ENCODE measurements at regions of chr6 and their contacts with region 1.

Region 1: DNA sequence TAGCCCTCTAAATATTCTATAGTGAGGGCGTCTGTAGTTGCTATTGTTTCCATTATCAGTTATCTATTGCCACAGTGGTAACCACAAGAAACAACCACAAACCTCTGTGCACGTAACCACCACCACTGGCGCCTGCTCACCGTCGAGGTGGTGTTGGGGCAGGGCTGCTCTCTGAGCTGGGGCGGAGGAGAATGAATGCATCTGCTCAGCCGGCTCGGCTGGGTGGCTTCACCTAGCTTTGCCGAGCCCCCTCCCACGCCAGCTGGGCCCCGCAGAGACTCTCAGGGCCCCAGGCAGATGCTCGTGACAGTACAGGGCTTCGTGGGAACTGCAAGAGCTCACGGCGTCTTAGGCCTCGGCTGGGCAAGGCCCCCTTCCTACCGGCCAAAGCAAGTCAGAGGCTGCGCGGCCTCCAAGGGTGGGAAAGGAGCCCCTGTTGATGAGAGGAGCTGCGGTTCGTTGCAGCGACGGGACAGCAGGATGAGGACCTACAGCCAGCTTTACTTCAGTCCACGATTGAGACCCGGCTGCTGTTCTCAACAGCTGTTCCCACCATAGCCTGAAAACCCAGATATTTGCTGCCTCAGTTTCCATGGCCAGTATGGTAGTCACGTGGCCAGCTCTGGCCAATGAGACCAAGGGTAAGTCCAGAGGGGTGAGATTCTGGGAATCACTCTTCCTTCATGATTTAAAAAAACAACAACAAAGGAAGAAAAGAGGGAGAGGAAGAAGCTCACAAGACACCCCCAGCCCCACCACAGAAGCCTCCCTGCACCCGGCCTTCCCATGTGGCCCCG is 120.2 kb upstream of the AFDN start:
- DNase-seq: peak; percentile 77
- H3K4me3 Mint-ChIP-seq: peak overlapping the region; percentile 63
- H3K27ac Mint-ChIP-seq: peak overlapping the region; percentile 95
- H3K4me1 Mint-ChIP-seq: peaks cover 50% of the 10 kb centered on the region
- H3K27me3 Mint-ChIP-seq: peaks cover 37% of the 10 kb centered on the region

Region 2: GRCh38 chr6:166419286-166419685 is 1287.2 kb before region 1 on chr6:
- intact Hi-C with region 1: loop called (anchors 10 kb)
- DNase-seq: peak; percentile 61
- H3K4me3 Mint-ChIP-seq: no peak overlapping the region
- H3K27ac Mint-ChIP-seq: no peak overlapping the region
- H3K4me1 Mint-ChIP-seq: peaks cover 62% of the 10 kb centered on the region
- H3K27me3 Mint-ChIP-seq: peaks cover 4% of the 10 kb centered on the region

Region 3: DNA sequence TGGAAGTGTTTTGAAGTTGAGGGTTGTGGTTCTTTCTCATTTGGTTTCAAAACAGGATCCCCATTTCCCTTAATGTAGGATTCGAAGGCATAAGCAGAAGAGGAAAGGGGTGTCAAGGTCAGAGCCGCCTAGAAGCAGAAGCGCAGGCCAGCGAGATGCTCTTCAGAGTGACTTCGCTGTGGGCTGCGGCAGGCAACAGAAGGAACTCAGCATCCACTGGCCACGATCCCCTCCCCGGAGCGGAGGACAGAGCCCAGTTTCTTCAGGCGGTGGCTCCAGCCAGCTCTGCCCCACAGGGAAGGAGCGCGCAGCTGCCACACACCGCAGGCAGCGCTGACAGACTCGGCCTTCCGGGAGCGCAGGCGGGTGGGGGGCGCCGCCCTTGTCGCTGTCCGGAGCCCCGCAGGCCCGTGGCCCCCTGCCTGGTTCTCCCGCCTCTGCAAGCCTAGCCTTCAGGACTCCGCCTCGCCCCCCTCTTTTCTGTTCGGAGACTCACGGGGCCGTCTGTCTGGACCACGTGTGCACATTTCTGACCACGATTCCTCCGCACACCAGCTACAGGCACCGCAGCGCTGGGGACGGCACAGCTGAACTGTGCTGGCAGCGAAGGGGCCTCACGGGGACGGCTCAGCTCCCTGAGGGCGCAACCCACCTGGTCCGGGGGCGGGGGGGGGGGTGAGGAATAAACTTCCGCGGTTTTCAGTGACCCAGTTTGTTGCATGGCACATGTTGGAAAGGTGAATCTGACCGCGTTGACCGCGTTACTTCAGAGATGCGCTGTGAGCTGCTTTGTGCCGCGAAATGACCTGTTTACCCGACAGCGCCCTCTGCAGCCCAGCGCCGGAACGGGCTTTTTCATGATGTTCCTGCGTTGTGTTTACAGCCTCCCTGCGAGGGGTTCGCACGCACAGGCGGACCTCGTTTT is 355.5 kb before region 1 on chr6:
- intact Hi-C with region 1: loop called (anchors 2 kb)
- DNase-seq: peak; percentile 72
- H3K4me3 Mint-ChIP-seq: peak overlapping the region; percentile 84
- H3K27ac Mint-ChIP-seq: peak overlapping the region; percentile 78
- H3K4me1 Mint-ChIP-seq: peaks cover 24% of the 10 kb centered on the region
- H3K27me3 Mint-ChIP-seq: peaks cover 33% of the 10 kb centered on the region

Region 4: GRCh38 chr6:167652701-167653095 is 53.8 kb before region 1 on chr6:
- intact Hi-C with region 1: loop called (anchors 2 kb)
- DNase-seq: no peak
- H3K4me3 Mint-ChIP-seq: no peak overlapping the region
- H3K27ac Mint-ChIP-seq: no peak overlapping the region
- H3K4me1 Mint-ChIP-seq: no peaks in the 10 kb centered on the region
- H3K27me3 Mint-ChIP-seq: no peaks in the 10 kb centered on the region

Region 5: GRCh38 chr6:167742719-167743303 is 36.3 kb after region 1 on chr6:
- intact Hi-C with region 1: no loop called
- DNase-seq: no peak
- H3K4me3 Mint-ChIP-seq: no peak overlapping the region
- H3K27ac Mint-ChIP-seq: no peak overlapping the region
- H3K4me1 Mint-ChIP-seq: no peaks in the 10 kb centered on the region
- H3K27me3 Mint-ChIP-seq: peaks cover 18% of the 10 kb centered on the region

Region 6: DNA sequence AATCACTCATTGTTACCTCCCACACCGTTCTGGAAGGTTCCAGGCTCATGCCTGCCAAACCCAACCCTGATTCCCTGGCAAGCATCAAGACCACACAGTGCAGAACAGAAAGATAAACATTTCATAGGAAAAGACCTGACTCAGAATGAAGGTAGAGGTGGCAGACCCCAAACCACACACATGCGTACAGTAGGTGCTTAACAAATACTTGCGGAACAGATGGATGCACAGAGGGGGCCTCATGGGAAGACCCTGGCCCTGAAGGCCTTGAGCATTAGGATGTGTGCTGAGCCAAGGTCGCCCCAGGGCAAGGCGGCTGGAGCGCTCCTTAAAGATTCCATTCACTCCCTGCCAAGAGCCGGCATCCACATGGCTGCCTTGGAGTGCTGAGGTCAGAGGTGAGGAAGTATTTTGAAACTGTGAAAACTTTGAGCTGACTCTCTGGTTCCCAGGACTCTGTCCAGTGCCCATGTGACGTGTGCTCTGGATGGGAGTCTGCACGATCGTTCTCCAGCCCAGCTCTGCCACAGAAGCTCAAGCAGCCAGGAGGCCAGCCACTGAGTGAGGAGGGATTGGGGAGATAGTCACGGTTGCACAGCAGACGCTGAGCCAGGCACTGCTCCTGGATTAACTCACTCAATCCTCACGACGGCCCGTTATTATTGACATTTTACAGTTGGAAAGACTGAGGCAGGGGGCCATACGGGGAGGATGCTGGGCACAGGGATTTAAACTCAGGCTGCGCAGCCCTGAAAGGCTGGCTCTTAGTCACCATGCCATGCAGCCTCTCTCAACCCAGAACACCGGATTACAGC is 54.7 kb after region 1 on chr6:
- intact Hi-C with region 1: no loop called
- DNase-seq: no peak
- H3K4me3 Mint-ChIP-seq: no peak overlapping the region
- H3K27ac Mint-ChIP-seq: no peak overlapping the region
- H3K4me1 Mint-ChIP-seq: no peaks in the 10 kb centered on the region
- H3K27me3 Mint-ChIP-seq: peaks cover 4% of the 10 kb centered on the region

Region 7: GRCh38 chr6:167832497-167833395 is 126.2 kb after region 1 on chr6:
- intact Hi-C with region 1: loop called (anchors 2 kb)
- DNase-seq: no peak
- H3K4me3 Mint-ChIP-seq: peak overlapping the region; percentile 45
- H3K27ac Mint-ChIP-seq: peak overlapping the region; percentile 46
- H3K4me1 Mint-ChIP-seq: peaks cover 59% of the 10 kb centered on the region
- H3K27me3 Mint-ChIP-seq: peaks cover 29% of the 10 kb centered on the region

Region 8: DNA sequence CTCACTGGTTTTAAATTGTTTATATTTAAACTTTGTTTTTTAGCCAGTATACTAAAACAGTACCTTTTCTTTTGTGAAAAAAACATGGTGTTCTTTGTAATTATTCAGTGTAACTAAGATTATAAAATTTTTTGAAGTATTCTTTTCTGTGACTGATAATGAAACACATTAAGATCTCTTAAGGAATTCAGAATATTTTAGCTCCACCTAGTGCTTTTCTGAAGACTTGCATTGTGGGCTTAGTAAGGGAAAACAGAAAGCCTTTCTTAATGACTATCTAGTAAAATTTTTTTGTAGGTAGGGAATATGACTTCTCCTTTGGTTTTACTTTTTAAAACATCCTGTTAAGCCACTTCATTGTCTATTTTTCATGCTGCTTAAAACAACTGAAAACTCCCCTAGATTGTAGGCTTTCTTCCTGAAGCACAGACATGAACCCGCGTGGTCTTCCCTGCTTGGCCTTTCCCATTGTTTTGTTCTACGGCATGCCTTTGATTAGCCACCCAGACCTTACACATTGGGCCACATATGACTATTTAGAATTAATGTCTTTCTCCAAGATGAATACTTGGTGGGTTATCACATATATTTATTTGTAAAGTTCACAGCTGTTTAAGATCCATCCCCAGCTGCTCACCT is 192.3 kb after region 1 on chr6:
- intact Hi-C with region 1: loop called (anchors 5 kb)
- DNase-seq: no peak
- H3K4me3 Mint-ChIP-seq: no peak overlapping the region
- H3K27ac Mint-ChIP-seq: no peak overlapping the region
- H3K4me1 Mint-ChIP-seq: no peaks in the 10 kb centered on the region
- H3K27me3 Mint-ChIP-seq: no peaks in the 10 kb centered on the region